A549 (cell line): ENCODE measurements at regions of chr17 and their contacts with region 1.

Region 1: GRCh38 chr17:7280519-7281429 is 744 bp upstream of the SLC2A4 start:
- DNase-seq: peak; percentile 90 to 96
- ATAC-seq: peak; percentile 80 to 88
- H3K4me3 ChIP-seq: peak overlapping the region; percentile 46
- H3K27ac ChIP-seq: peak overlapping the region; percentile 47 to 74
- H3K4me1 ChIP-seq: peaks cover 11% of the 10 kb centered on the region
- CTCF ChIP-seq: peak; percentile 97
- EP300 ChIP-seq: no peak
- POLR2A ChIP-seq: no peak
- RAD21 ChIP-seq: peak; percentile 99 to 100

Region 2: DNA sequence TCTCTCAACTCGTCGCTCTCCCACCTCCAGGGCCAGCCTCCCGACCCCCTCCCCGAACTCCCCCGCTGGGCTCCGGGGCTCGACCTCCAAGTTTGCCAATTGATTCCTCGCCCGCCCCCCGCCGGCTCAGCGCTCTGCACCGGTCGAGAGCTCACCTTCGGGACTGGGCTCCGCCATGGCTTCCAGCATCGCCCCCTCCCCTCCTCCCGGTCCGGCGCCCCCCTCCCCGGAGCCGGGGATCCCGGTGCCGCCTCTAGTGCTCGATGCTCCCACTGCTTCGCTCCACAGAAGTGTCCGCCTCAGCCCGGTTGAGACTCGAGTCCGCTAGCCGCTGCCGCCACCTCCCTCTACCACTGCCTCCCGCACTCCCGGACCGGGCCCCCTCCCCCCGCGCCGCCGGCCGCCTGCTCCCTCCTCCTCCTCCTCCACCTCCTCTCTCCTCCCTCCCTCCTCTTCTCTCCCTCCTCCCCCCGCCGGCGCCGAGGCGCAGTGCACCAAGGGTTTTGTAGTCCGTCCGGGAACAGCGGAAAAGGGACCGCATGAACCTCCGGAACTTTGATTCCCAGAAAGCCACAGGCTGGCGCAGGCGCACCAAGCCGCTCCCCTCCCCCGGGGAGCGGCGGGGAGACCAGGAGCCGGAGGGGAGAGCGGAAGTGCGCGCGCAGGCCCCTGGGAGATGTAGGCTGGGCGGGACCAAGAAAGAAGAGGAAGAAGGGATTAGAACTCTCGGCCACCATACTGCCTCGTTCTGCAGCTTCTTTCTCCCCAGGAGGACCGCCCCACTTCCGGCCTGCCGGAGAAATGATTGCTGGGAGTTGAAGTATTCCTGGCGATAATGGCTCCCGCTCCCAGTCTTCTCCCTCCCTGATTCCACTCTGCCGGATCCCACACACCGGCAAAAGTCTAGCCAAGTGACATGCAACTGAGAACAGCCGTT is 41.4 kb before region 1 on chr17 and contains the start of gene PHF23:
- CTCF ChIA-PET with region 1: interaction called, 21 read pairs
- POLR2A ChIA-PET with region 1: no interaction called
- DNase-seq: peak; percentile 100
- ATAC-seq: peak; percentile 54 to 79
- H3K4me3 ChIP-seq: peak within 1 kb of the TSS; percentile 99
- H3K27ac ChIP-seq: peak within 1 kb of the TSS; percentile 98 to 100
- H3K4me1 ChIP-seq: peaks cover 52% of the 10 kb centered on the region
- CTCF ChIP-seq: no peak
- EP300 ChIP-seq: no peak
- POLR2A ChIP-seq: peak; percentile 70
- RAD21 ChIP-seq: no peak
- polyA plus RNA-seq, gene PHF23: 52.1 and 61.2 TPM in 2 replicates

Region 3: DNA sequence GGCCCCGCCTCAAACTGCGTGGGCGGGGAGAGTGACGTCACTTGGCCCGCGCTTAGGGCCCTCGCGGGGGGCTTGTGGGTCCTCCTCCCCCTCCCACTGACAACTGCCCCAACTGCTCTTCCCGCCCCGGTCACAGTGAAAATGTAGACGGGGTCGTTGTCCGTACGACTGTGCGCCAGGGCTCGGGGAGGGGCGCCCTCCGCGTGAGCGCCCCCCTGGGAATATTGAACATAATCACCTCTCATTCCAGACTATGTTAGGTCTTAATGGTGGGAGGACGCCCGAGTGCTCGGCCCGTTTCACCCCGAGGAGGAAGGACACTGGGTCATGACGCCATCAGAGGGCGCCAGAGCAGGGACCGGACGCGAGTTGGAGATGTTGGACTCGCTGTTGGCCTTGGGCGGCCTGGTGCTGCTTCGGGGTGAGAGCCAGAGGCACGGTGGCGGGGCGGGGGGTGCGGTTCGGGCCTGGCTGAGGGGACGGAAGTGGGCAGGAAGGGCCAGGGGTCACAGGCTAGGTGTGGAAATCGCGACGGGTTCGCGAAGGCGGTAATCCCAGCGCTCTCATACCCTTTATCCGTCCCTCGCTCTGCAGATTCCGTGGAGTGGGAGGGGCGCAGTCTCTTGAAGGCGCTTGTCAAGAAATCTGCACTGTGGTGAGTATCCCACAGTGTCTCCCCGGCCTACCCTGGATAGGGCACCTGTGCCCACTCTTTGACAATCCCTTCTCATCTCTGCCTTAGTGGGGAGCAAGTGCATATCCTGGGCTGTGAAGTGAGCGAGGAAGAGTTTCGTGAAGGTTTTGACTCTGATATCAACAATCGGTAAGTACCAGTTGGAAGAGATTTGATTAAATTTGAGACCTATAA is 28.4 kb before region 1 on chr17 and contains the start of gene ELP5:
- CTCF ChIA-PET with region 1: interaction called, 16 read pairs
- POLR2A ChIA-PET with region 1: interaction called, 4 read pairs
- DNase-seq: peak; percentile 97 to 98
- ATAC-seq: peak; percentile 85 to 86
- H3K4me3 ChIP-seq: peak within 1 kb of the TSS; percentile 99
- H3K27ac ChIP-seq: peak within 1 kb of the TSS; percentile 96 to 99
- H3K4me1 ChIP-seq: peaks cover 28% of the 10 kb centered on the region
- CTCF ChIP-seq: peak; percentile 54
- EP300 ChIP-seq: no peak
- POLR2A ChIP-seq: peak; percentile 90
- RAD21 ChIP-seq: peak; percentile 31 to 56; a peak in 4 of 5 replicates
- polyA plus RNA-seq, gene ELP5: 114 and 133 TPM in 2 replicates

Region 4: GRCh38 chr17:7263083-7264078 is 17.4 kb before region 1 on chr17:
- CTCF ChIA-PET with region 1: interaction called, 45 read pairs
- POLR2A ChIA-PET with region 1: interaction called, 3 read pairs
- DNase-seq: peak in 1 of 2 experiments; percentile 46
- ATAC-seq: peak; percentile 20 to 22; a peak in 4 of 6 replicates
- H3K4me3 ChIP-seq: no peak overlapping the region
- H3K27ac ChIP-seq: peak overlapping the region; percentile 73 to 83
- H3K4me1 ChIP-seq: peaks cover 64% of the 10 kb centered on the region
- CTCF ChIP-seq: no peak
- EP300 ChIP-seq: no peak
- POLR2A ChIP-seq: no peak
- RAD21 ChIP-seq: no peak

Region 5: DNA sequence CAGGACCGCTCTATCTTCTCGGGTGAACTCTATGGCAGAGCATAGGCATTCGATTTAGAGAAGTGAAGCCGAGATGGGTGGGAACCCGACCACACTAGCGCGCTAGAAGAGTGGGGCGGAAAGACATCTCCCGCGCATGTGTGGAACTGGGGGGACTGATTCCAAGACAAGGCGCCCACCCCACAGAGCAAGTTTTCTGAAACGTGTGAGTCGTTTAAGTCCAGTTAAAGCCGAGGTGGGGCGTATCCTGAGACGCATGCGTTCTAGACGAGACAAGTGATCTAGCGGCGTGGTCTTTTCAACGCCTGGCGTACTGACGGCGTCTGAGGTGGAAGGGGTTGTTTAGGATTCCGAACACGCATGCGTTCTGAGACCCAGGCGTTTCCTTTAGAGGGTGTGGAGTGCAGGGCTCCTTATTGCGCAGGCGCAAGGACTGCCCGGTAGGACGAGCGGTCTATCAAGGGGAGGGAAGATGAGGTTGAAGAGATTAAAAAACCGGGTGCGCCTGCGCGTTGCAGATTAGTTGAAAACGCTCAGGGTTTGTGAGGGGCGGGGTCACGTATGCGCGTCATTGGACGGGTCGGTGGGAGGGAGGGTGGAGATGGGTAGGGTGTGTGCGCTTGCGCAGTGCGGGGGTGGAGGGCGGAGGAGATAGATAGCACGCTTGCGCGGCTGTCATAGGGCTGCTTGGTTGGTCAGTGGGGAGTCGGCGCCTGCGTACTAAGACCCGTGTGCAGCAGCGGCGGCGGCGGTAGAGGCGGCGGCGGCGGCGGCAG is 26.3 kb after region 1 on chr17 and contains the start of gene EIF5A:
- CTCF ChIA-PET with region 1: interaction called, 446 read pairs
- POLR2A ChIA-PET with region 1: interaction called, 11 read pairs
- DNase-seq: peak; percentile 100
- ATAC-seq: peak; percentile 86
- H3K4me3 ChIP-seq: peak within 1 kb of the TSS; percentile 98
- H3K27ac ChIP-seq: peak within 1 kb of the TSS; percentile 98 to 100
- H3K4me1 ChIP-seq: peaks cover 29% of the 10 kb centered on the region
- CTCF ChIP-seq: no peak
- EP300 ChIP-seq: no peak
- POLR2A ChIP-seq: peak; percentile 71
- RAD21 ChIP-seq: no peak
- polyA plus RNA-seq, gene EIF5A: 945 and 969 TPM in 2 replicates

Region 6: GRCh38 chr17:7314719-7315569 is 34.2 kb after region 1 on chr17 and contains the start of gene GPS2:
- CTCF ChIA-PET with region 1: interaction called, 18 read pairs
- POLR2A ChIA-PET with region 1: no interaction called
- DNase-seq: peak; percentile 93 to 95
- ATAC-seq: peak; percentile 77 to 82
- H3K4me3 ChIP-seq: peak within 1 kb of the TSS; percentile 75
- H3K27ac ChIP-seq: peak within 1 kb of the TSS; percentile 88 to 95
- H3K4me1 ChIP-seq: peaks cover 47% of the 10 kb centered on the region
- CTCF ChIP-seq: no peak
- EP300 ChIP-seq: peak in 1 of 2 experiments; percentile 6; a peak in 1 of 5 replicates
- POLR2A ChIP-seq: peak; percentile 82
- RAD21 ChIP-seq: no peak; a peak in 2 of 5 replicates
- polyA plus RNA-seq, gene GPS2: 48.5 and 61.7 TPM in 2 replicates

Region 7: DNA sequence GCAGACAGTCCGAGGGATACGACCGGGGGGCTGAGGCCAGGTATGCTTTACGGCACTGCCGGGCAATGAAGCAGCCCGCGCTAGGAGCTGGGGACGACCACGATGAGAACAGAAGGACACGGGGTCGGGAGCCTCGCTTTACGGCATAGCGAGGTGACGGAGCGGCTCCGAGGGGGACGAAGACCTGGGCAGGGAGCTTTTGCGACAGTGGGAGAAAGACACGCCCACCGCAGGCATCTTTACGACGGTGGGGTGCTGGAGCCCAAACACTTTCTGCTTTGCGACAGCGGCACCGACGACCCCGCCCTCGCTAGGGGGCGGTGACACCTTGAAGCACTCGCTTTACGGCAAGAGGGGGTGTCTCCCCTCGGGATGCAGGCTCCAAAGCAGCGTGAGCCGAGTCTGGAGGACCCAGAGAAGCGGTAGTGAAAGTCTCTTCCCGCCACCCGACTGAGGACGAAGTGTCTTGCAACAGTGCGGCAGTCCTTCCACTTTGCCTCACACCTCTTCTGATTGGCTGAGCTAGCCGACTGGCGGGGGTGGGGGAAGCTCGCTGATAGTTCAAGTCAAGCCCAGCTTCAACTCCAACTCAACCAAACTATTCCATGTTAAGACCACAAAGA is 48.7 kb after region 1 on chr17:
- CTCF ChIA-PET with region 1: interaction called, 26 read pairs
- POLR2A ChIA-PET with region 1: no interaction called
- DNase-seq: peak; percentile 99 to 100
- ATAC-seq: peak; percentile 62 to 82
- H3K4me3 ChIP-seq: peak overlapping the region; percentile 81
- H3K27ac ChIP-seq: peak overlapping the region; percentile 89 to 98
- H3K4me1 ChIP-seq: peaks cover 15% of the 10 kb centered on the region; the same call in 2 of the 3 replicates
- CTCF ChIP-seq: no peak
- EP300 ChIP-seq: no peak
- POLR2A ChIP-seq: peak; percentile 87
- RAD21 ChIP-seq: no peak

Region 8: DNA sequence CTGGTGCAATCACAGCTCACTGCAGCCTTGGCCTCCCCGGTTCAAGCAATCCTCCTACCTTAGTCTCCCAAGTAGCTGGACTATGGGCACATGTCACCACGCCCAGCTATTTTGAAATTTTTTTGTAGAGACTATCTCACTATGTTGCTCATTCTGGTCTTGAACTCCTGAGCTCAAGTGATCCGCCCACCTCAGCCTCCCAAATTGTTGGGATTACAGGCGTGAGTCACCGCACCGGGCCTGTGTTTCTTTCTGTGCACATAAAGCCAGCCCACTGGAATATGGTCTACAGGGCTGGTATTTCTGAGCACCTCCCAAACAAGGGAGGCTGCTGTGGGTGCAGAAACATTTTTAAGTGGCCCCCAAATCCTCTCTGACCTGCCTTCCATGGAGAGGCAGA is 82.5 kb after region 1 on chr17:
- CTCF ChIA-PET with region 1: no interaction called
- POLR2A ChIA-PET with region 1: no interaction called
- DNase-seq: peak in 1 of 2 experiments; percentile 52
- ATAC-seq: peak; percentile 45 to 69; a peak in 4 of 6 replicates
- H3K4me3 ChIP-seq: no peak overlapping the region
- H3K27ac ChIP-seq: no peak overlapping the region
- H3K4me1 ChIP-seq: peaks cover 7% of the 10 kb centered on the region; the same call in 2 of the 3 replicates
- CTCF ChIP-seq: no peak
- EP300 ChIP-seq: no peak
- POLR2A ChIP-seq: no peak
- RAD21 ChIP-seq: no peak